ENCODE measurements at regions of chr17 and their contacts with region 1.

Region 1: DNA sequence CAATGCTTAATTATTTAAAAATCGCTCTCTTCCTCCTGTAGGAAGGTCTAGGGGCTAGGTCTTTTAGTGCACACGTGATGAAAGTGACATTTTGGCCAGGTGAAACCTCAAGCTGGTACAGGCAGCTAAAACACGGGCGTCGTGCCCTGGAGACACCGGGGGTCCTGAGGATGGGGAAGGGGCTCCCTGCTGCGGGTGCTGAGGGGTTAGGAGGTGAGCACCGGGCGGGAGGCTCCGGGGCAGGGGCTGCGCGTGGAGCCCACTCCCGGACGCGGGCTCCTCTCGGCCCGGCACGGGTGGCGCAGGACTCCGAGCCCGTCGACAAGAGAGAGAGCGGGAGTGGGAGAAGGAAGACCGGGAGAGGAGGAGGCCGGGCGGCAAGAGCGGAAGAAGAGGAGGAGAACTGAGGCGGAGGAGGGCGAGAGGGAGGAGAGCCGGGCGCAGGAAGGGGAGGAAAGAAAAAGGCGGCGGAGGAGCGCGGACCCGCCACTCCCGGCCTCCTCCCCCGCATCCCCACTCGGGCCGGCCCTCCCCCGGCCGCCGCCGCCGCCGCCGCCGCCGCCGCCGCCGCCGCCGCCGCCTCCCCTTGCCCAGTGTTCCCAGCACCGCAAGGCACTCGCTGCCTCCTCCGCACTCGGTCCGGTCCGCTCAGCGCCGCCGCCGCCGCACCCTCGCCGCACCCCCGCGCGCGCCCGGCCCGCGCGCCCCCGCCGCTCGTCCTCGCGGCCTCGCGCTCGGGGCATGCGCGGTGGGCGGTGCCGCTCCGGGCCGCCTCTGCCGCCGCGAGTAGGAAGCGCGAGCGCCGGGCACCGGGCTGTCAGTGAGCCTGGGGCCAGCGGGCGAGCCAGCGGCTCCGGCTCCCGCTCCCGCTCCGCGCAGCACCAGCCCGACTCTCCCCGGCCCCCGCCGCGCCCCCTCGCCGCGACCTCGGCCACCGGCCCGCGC is at the start of gene PRKCA:
- DNase-seq: peak; percentile 68
- ATAC-seq: peak; percentile 76
- H3K4me3 Mint-ChIP-seq: peak within 1 kb of the TSS; percentile 94
- H3K27ac Mint-ChIP-seq: peak within 1 kb of the TSS; percentile 96
- H3K4me1 Mint-ChIP-seq: peaks cover 34% of the 10 kb centered on the region
- H3K27me3 Mint-ChIP-seq: no peaks in the 10 kb centered on the region
- CTCF ChIP-seq: no peak
- total RNA-seq, gene PRKCA: 84.4 to 87.9 TPM

Region 2: DNA sequence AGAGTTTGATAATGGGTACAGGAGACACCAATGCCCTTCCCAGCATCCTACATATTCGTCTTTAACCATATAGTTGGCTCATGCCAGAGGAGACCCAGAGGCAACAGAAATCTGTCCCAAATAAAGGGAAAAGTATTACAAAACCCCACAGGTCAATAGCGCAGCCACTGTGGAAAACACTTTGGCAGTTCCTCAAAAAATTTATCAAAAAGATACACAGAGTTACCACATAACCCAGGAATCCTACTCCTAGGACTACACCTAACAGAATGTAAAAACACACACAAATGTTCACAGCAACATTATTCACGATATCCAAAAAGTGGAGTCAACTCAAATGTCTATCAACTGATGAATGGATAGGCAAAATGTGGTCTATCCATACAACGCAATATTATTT is 245.9 kb before region 1 on chr17:
- CTCF ChIA-PET with region 1: no interaction called
- POLR2A ChIA-PET with region 1: no interaction called
- intact Hi-C with region 1: no loop called
- DNase-seq: no peak
- ATAC-seq: no peak
- H3K4me3 Mint-ChIP-seq: no peak overlapping the region
- H3K27ac Mint-ChIP-seq: no peak overlapping the region
- H3K4me1 Mint-ChIP-seq: no peaks in the 10 kb centered on the region
- H3K27me3 Mint-ChIP-seq: no peaks in the 10 kb centered on the region
- CTCF ChIP-seq: no peak

Region 3: DNA sequence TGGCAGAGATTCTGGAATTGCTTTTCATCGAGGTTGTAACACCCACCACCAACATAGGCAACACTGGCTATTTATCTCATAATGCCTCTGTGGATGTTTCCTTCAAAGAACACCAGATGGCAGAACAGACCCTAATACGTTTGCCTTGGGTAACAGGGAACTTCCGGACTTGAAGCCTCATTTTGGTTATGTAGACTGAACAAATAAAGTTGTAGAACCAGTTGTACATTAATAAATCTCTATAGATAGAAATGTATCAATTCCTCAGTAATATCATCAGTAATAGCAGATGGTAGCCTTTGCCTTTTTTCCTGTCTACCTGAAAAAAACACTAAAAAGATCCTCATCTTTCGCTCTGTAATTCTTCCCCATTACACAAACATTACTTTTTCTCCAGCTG is 47.0 kb before region 1 on chr17:
- CTCF ChIA-PET with region 1: interaction called, 4 read pairs
- POLR2A ChIA-PET with region 1: no interaction called
- intact Hi-C with region 1: loop called (anchors 5 kb)
- DNase-seq: peak; percentile 54
- ATAC-seq: peak; percentile 96
- H3K4me3 Mint-ChIP-seq: peak overlapping the region; percentile 32
- H3K27ac Mint-ChIP-seq: peak overlapping the region; percentile 40
- H3K4me1 Mint-ChIP-seq: peaks cover 14% of the 10 kb centered on the region
- H3K27me3 Mint-ChIP-seq: no peaks in the 10 kb centered on the region
- CTCF ChIP-seq: peak; percentile 82

Region 4: DNA sequence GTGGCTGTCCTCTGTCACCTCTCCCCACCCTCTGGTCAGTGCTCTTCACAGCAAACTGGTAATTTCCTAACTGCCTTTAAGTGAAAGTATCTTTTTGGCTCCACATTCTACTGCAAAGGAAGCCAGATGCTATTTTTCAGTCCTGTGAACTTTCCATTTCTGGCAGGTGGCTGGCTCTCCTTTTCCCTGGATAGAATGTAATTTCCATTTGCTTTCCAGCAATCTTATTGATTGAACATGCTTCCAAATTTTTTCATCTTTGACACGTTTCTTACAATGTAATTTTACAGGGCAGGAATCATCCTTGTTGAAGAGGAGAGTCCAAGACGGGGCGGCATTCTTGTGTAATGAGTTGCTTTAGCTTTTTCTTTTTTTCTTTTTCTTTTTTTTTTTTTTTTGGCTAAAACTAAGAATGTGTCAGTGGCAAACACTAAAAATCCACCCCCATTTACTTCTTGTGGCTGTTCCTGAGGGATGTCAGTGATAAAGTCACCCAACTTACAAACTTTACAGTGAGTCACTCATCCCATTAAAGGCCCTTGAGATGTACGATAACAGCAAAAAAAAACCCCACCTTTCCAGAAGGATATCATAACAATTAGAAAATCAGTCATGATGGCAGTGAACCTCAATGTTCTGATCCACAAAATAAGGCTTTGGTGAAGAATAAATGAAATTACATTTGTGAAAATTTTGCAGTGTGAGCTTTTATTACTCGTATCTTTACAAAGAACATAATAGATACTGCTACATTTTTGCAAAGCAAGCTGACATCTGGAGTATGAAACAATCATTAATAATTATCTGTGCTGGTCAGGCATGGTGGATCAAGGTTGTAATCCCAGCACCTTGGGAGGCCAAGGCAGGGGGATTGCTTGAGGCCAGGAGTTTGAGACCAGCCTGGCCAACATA is 29.0 kb before region 1 on chr17:
- CTCF ChIA-PET with region 1: no interaction called
- POLR2A ChIA-PET with region 1: no interaction called
- intact Hi-C with region 1: no loop called
- DNase-seq: no peak
- ATAC-seq: no peak
- H3K4me3 Mint-ChIP-seq: no peak overlapping the region
- H3K27ac Mint-ChIP-seq: no peak overlapping the region
- H3K4me1 Mint-ChIP-seq: peaks cover 4% of the 10 kb centered on the region
- H3K27me3 Mint-ChIP-seq: no peaks in the 10 kb centered on the region
- CTCF ChIP-seq: no peak

Region 5: DNA sequence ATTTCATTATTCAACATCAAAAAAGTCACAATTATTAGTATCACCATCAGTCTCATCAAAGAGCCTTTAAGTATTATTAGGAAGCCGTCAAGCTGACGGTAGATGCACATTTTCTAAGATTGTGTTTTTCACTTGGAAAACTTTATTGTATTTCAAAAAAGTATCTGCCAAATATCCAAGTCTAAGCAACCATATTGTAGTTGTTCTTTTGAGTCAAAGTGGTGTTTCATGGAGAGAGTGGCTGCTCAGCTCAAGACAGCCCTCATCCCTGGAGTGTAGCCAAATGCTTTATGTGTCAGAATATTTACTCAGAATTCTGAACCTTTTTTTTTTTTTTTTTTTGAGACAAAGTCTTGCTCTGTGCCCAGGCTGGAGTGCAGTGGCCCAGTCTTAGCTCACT is 45.5 kb after region 1 on chr17:
- CTCF ChIA-PET with region 1: no interaction called
- POLR2A ChIA-PET with region 1: no interaction called
- intact Hi-C with region 1: no loop called
- DNase-seq: peak; percentile 36
- ATAC-seq: peak; percentile 50
- H3K4me3 Mint-ChIP-seq: no peak overlapping the region
- H3K27ac Mint-ChIP-seq: no peak overlapping the region
- H3K4me1 Mint-ChIP-seq: peaks cover 62% of the 10 kb centered on the region
- H3K27me3 Mint-ChIP-seq: no peaks in the 10 kb centered on the region
- CTCF ChIP-seq: no peak

Region 6: GRCh38 chr17:66397486-66397885 is 95.4 kb after region 1 on chr17:
- CTCF ChIA-PET with region 1: interaction called, 4 read pairs
- POLR2A ChIA-PET with region 1: interaction called, 7 read pairs
- intact Hi-C with region 1: loop called (anchors 5 kb)
- DNase-seq: peak; percentile 54
- ATAC-seq: peak; percentile 69
- H3K4me3 Mint-ChIP-seq: no peak overlapping the region
- H3K27ac Mint-ChIP-seq: peak overlapping the region; percentile 80
- H3K4me1 Mint-ChIP-seq: peaks cover 85% of the 10 kb centered on the region
- H3K27me3 Mint-ChIP-seq: no peaks in the 10 kb centered on the region
- CTCF ChIP-seq: no peak

Region 7: GRCh38 chr17:66426397-66427033 is 124.4 kb after region 1 on chr17:
- CTCF ChIA-PET with region 1: interaction called, 3 read pairs
- POLR2A ChIA-PET with region 1: no interaction called
- intact Hi-C with region 1: loop called (anchors 5 kb)
- DNase-seq: peak; percentile 61
- ATAC-seq: peak; percentile 90
- H3K4me3 Mint-ChIP-seq: peak overlapping the region; percentile 4
- H3K27ac Mint-ChIP-seq: peak overlapping the region; percentile 79
- H3K4me1 Mint-ChIP-seq: peaks cover 72% of the 10 kb centered on the region
- H3K27me3 Mint-ChIP-seq: no peaks in the 10 kb centered on the region
- CTCF ChIP-seq: peak; percentile 46

Region 8: DNA sequence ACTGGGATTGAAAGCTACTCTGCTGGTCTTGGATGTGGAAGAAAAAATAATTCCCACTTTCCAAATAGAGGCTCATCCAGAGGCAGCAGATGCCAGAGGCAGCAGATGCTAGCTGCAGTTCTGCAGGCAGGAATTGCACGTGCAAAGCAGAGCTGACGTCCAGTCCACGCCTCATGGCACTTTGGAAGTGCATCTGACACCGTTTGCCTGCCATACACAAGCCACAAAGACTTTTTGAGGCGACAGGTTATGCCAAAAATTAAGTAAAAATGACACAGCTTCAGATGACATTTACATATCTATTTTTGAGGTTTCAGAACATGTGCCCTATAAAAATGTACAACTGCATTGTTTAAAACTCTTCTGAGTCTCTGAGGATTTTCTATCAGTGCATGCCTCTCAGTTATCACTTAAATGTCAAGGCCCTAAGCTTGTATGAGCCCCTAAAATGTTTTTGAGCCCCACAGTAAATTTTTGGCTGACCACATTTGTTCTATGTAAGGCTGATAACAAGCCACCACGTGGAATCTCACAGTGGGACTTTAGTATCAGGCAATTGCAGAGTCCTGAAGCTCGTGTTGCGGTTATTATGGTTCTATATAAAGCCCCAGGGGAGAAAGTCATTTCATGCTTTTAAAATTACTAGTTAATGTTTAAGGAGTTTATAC is 239.5 kb after region 1 on chr17:
- CTCF ChIA-PET with region 1: no interaction called
- POLR2A ChIA-PET with region 1: no interaction called
- intact Hi-C with region 1: loop called (anchors 10 kb)
- DNase-seq: peak; percentile 35
- ATAC-seq: peak; percentile 67
- H3K4me3 Mint-ChIP-seq: no peak overlapping the region
- H3K27ac Mint-ChIP-seq: peak overlapping the region; percentile 84
- H3K4me1 Mint-ChIP-seq: peaks cover 78% of the 10 kb centered on the region
- H3K27me3 Mint-ChIP-seq: no peaks in the 10 kb centered on the region
- CTCF ChIP-seq: no peak

Measured in activated CD8-positive, alpha-beta T cell treated with anti-CD3 and anti-CD28 coated beads for 36 hours (primary cell).